Activated CD4-positive, alpha-beta memory T cell treated with anti-CD3 and anti-CD28 coated beads for 36 hours (primary cell): ENCODE measurements at regions of chr2 and their contacts with region 1.

Region 1: GRCh38 chr2:136238286-136239078 is 120.5 kb upstream of the CXCR4 start:
- DNase-seq: peak; percentile 61
- H3K4me3 Mint-ChIP-seq: no peak overlapping the region
- H3K27ac Mint-ChIP-seq: peak overlapping the region; percentile 93
- H3K4me1 Mint-ChIP-seq: peaks cover 64% of the 10 kb centered on the region
- H3K27me3 Mint-ChIP-seq: no peaks in the 10 kb centered on the region

Region 2: GRCh38 chr2:136008205-136008865 is 230.1 kb before region 1 on chr2:
- CTCF ChIA-PET with region 1: no interaction called
- POLR2A ChIA-PET with region 1: no interaction called
- intact Hi-C with region 1: loop called (anchors 1 kb)
- DNase-seq: peak; percentile 87
- H3K4me3 Mint-ChIP-seq: no peak overlapping the region
- H3K27ac Mint-ChIP-seq: peak overlapping the region; percentile 72
- H3K4me1 Mint-ChIP-seq: peaks cover 49% of the 10 kb centered on the region
- H3K27me3 Mint-ChIP-seq: no peaks in the 10 kb centered on the region

Region 3: DNA sequence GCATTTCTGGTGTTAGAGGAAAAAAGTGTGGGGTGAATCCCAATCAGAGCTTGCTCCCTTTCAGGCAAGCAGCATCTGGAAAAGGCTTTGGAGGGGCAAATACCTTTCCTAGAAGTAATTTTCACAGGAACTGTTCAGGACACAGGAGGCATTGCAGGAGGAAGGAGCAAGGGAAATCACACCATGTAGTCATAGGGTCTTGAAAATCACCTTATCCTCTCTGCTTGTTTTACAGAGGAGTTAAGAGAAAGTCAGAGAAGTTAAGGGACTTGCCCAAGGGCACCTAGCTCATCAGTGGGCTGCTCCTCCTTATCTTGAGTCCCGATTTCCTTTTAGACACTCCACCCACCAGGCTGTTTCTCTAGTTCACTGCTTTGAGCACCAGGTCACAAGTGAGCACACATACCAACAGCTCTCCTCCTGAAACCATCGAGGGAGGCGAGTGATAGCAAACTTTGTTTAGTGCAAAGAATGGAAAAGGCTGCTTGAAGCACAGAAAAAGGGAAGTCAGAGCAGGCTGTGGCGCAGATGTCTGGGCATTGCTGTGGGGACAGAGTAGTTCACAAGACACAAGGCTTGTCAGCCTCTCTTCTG is 31.4 kb before region 1 on chr2:
- CTCF ChIA-PET with region 1: no interaction called
- POLR2A ChIA-PET with region 1: interaction called, 4 read pairs
- intact Hi-C with region 1: loop called (anchors 1 kb)
- DNase-seq: peak; percentile 65
- H3K4me3 Mint-ChIP-seq: peak overlapping the region; percentile 3
- H3K27ac Mint-ChIP-seq: peak overlapping the region; percentile 96
- H3K4me1 Mint-ChIP-seq: peaks cover 46% of the 10 kb centered on the region
- H3K27me3 Mint-ChIP-seq: no peaks in the 10 kb centered on the region

Region 4: GRCh38 chr2:136305517-136306192 is 67.2 kb after region 1 on chr2:
- CTCF ChIA-PET with region 1: no interaction called
- POLR2A ChIA-PET with region 1: interaction called, 4 read pairs
- intact Hi-C with region 1: loop called (anchors 1 kb)
- DNase-seq: peak; percentile 84
- H3K4me3 Mint-ChIP-seq: peak overlapping the region; percentile 33
- H3K27ac Mint-ChIP-seq: peak overlapping the region; percentile 72
- H3K4me1 Mint-ChIP-seq: peaks cover 34% of the 10 kb centered on the region
- H3K27me3 Mint-ChIP-seq: peaks cover 3% of the 10 kb centered on the region

Region 5: GRCh38 chr2:136362676-136363390 is 124.4 kb after region 1 on chr2:
- CTCF ChIA-PET with region 1: no interaction called
- POLR2A ChIA-PET with region 1: no interaction called
- intact Hi-C with region 1: loop called (anchors 2 kb)
- DNase-seq: peak; percentile 67
- H3K4me3 Mint-ChIP-seq: peak overlapping the region; percentile 25
- H3K27ac Mint-ChIP-seq: peak overlapping the region; percentile 53
- H3K4me1 Mint-ChIP-seq: peaks cover 56% of the 10 kb centered on the region
- H3K27me3 Mint-ChIP-seq: peaks cover 5% of the 10 kb centered on the region

Region 6: DNA sequence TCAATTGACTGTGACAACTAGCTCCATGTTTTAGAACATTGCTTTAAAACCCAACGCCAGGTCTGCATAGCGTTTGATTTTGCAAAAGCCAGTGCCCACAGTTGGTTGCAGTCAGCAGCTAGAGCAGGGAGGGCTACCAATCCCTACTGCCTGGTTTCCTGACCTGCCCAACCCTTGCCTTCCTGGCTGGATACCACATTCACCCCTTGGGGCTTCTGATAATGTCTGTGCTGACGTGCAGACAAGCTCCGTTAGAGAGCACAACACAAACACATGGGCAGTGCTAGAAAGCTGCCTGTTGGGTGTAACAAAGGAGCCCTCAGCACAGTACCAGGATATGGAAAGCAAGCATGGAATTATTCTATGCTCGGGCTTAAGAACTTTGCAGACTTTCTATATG is 455.5 kb after region 1 on chr2:
- CTCF ChIA-PET with region 1: no interaction called
- POLR2A ChIA-PET with region 1: no interaction called
- intact Hi-C with region 1: no loop called
- DNase-seq: no peak
- H3K4me3 Mint-ChIP-seq: no peak overlapping the region
- H3K27ac Mint-ChIP-seq: no peak overlapping the region
- H3K4me1 Mint-ChIP-seq: no peaks in the 10 kb centered on the region
- H3K27me3 Mint-ChIP-seq: no peaks in the 10 kb centered on the region